Transverse colon (tissue), 4 donors: ENCODE measurements at regions of chr12 and their contacts with region 1.

Region 1: GRCh38 chr12:98516184-98516873 is 939 bp downstream of the TMPO start:
- DNase-seq: peak; percentile 82
- H3K4me3 ChIP-seq: peak overlapping the region; percentile 82 to 98 (median 94)
- H3K27ac ChIP-seq: peak overlapping the region; percentile 94 to 98 (median 96)
- H3K4me1 ChIP-seq: peaks cover 9 to 53% (median 24%) of the 10 kb centered on the region in 4 donors
- H3K27me3 ChIP-seq: no peaks in the 10 kb centered on the region
- CTCF ChIP-seq: peak; percentile 67 to 77 (median 74)
- EP300 ChIP-seq: no peak
- POLR2A ChIP-seq: no peak

Region 2: DNA sequence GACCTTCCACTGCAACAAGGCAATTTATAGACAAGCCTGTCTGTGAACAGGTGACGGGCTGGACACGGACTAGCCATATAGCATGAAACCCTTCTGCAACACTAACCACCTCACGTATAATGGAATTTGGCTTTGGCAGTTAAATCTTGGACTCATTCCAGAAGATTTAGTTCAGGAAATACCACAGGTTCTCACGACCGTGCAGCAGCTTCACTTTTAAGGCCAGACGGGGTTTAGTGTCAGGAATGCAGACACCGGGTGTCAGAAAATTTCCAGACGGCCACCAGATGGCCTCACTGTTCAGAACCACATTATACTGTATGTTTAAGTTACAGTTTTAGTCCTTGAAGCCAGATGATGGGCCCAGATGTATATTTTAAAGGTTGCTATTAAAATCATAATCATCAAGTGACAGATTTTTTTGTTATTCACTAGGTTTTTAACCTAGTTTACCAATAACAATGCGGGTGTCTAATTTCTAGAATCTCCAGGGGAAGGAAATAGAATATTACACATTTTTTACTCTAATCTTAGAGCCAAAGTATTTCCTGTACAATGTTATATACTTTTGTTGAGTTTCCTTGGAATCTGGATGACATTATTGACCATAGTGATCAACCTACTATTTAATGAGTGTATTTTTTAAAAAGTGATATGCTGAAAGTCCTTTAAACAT is 91.5 kb before region 1 on chr12:
- in situ Hi-C with region 1: loop called in 1 of 4 experiments (anchors 10 kb)
- intact Hi-C with region 1: loop called (anchors 5 kb)
- DNase-seq: peak; percentile 71
- H3K4me3 ChIP-seq: no peak overlapping the region
- H3K27ac ChIP-seq: no peak overlapping the region
- H3K4me1 ChIP-seq: peaks cover 0 to 10% (median 2%) of the 10 kb centered on the region in 4 donors
- H3K27me3 ChIP-seq: no peaks in the 10 kb centered on the region
- CTCF ChIP-seq: peak; percentile 53 to 72 (median 64)
- EP300 ChIP-seq: no peak
- POLR2A ChIP-seq: no peak

Region 3: GRCh38 chr12:98490501-98491453 is 25.6 kb before region 1 on chr12:
- in situ Hi-C with region 1: no loop called
- intact Hi-C with region 1: loop called (anchors 1 kb)
- DNase-seq: peak; percentile 91
- H3K4me3 ChIP-seq: peak overlapping the region in 1 of 4 donors; percentile 16
- H3K27ac ChIP-seq: peak overlapping the region; percentile 60 to 82 (median 77)
- H3K4me1 ChIP-seq: peaks cover 4 to 17% (median 10%) of the 10 kb centered on the region in 4 donors
- H3K27me3 ChIP-seq: no peaks in the 10 kb centered on the region
- CTCF ChIP-seq: peak; percentile 85 to 96 (median 87)
- EP300 ChIP-seq: no peak
- POLR2A ChIP-seq: no peak

Region 4: GRCh38 chr12:98532681-98533304 is 16.5 kb after region 1 on chr12:
- in situ Hi-C with region 1: no loop called
- intact Hi-C with region 1: no loop called
- DNase-seq: no peak
- H3K4me3 ChIP-seq: no peak overlapping the region
- H3K27ac ChIP-seq: no peak overlapping the region
- H3K4me1 ChIP-seq: peaks cover 0 to 3% (median 0%) of the 10 kb centered on the region in 4 donors
- H3K27me3 ChIP-seq: no peaks in the 10 kb centered on the region
- CTCF ChIP-seq: peak; percentile 62 to 68 (median 68)
- EP300 ChIP-seq: no peak
- POLR2A ChIP-seq: no peak